Naive thymus-derived CD4-positive, alpha-beta T cell (primary cell): ENCODE measurements at regions of chr21 and their contacts with region 1.

Region 1: GRCh38 chr21:25385911-25386474 is 221.3 kb downstream of the MRPL39 start:
- DNase-seq: peak in 5 of 9 donors; percentile 14 to 35 (median 25)
- ATAC-seq: peak; percentile 57
- H3K4me3 ChIP-seq: no peak overlapping the region
- H3K4me3 Mint-ChIP-seq: no peak overlapping the region
- H3K27ac ChIP-seq: no peak overlapping the region
- H3K27ac Mint-ChIP-seq: peak overlapping the region in 1 of 9 donors; percentile 53
- H3K4me1 ChIP-seq: no peaks in the 10 kb centered on the region
- H3K4me1 Mint-ChIP-seq: peaks cover 0 to 9% (median 6%) of the 10 kb centered on the region in 7 donors
- H3K27me3 ChIP-seq: no peaks in the 10 kb centered on the region
- H3K27me3 Mint-ChIP-seq: peaks cover 0 to 13% (median 11%) of the 10 kb centered on the region in 5 donors

Region 2: DNA sequence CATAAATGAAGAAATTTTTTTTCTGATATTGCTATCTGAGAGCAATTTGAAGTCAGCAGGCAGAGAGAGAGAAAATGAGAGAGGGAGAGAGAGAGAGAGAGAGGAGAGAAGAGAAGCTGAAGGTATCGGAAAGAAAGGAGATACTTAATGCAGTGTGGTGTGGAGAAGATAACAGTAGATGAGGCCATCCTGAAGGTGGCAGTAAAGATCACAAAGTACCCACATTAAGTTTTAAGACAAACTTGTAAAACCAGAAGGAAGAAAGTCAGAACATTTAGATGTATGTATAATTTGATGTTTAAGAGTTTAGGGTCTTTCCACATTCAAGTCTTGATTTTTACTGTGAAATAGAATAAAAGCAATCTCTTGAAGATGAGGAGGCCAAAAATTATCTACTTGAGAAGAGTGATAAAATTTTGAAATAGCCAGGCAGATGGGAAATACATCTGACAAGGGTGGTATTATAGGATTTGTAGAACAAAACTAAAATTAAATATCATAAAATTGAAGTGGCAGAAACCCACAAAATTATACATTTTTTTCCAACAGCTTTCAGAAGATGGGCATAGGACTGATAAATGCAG is 1532.1 kb before region 1 on chr21:
- CTCF ChIA-PET with region 1: interaction called, 3 read pairs
- POLR2A ChIA-PET with region 1: no interaction called
- intact Hi-C with region 1: loop called (anchors 1 to 2 kb)
- DNase-seq: peak in 6 of 9 donors; percentile 18 to 56 (median 34)
- ATAC-seq: peak; percentile 75
- H3K4me3 ChIP-seq: no peak overlapping the region
- H3K4me3 Mint-ChIP-seq: no peak overlapping the region
- H3K27ac ChIP-seq: no peak overlapping the region
- H3K27ac Mint-ChIP-seq: peak overlapping the region in 1 of 9 donors; percentile 6
- H3K4me1 ChIP-seq: no peaks in the 10 kb centered on the region
- H3K4me1 Mint-ChIP-seq: peaks cover 4 to 11% (median 6%) of the 10 kb centered on the region in 7 donors
- H3K27me3 ChIP-seq: no peaks in the 10 kb centered on the region
- H3K27me3 Mint-ChIP-seq: peaks cover 0 to 8% (median 0%) of the 10 kb centered on the region in 5 donors

Region 3: GRCh38 chr21:24375201-24375600 is 1010.8 kb before region 1 on chr21:
- CTCF ChIA-PET with region 1: no interaction called
- POLR2A ChIA-PET with region 1: no interaction called
- intact Hi-C with region 1: loop called in 1 of 2 experiments (anchors 2 kb)
- DNase-seq: peak in 1 of 9 donors; percentile 7
- ATAC-seq: no peak
- H3K4me3 ChIP-seq: no peak overlapping the region
- H3K4me3 Mint-ChIP-seq: no peak overlapping the region
- H3K27ac ChIP-seq: no peak overlapping the region
- H3K27ac Mint-ChIP-seq: no peak overlapping the region
- H3K4me1 ChIP-seq: no peaks in the 10 kb centered on the region
- H3K4me1 Mint-ChIP-seq: peaks cover 0 to 3% (median 0%) of the 10 kb centered on the region in 7 donors
- H3K27me3 ChIP-seq: no peaks in the 10 kb centered on the region
- H3K27me3 Mint-ChIP-seq: no peaks in the 10 kb centered on the region

Region 4: DNA sequence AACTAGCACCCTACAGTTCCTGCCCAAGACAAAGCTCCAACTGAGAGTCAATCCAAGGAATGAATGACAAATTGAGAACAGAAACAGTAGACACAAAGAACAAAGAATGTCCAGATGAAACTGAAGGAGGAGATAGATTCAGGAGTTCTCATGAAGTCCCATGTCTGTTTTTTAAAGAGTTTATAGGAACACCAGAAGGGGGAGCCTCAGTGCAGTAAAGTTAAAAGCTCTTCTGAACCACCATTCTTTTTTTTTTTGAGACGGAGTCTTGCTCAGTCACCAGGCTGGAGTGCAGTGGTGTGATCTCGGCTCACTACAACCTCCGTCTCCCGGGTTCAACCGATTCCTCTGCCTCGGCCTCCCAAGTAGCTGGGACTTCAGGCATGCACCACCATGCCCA is 102.3 kb before region 1 on chr21:
- CTCF ChIA-PET with region 1: interaction called, 3 read pairs
- POLR2A ChIA-PET with region 1: no interaction called
- intact Hi-C with region 1: loop called in 1 of 2 experiments (anchors 1 kb)
- DNase-seq: peak in 1 of 9 donors; percentile 1
- ATAC-seq: no peak
- H3K4me3 ChIP-seq: no peak overlapping the region
- H3K4me3 Mint-ChIP-seq: no peak overlapping the region
- H3K27ac ChIP-seq: no peak overlapping the region
- H3K27ac Mint-ChIP-seq: no peak overlapping the region
- H3K4me1 ChIP-seq: no peaks in the 10 kb centered on the region
- H3K4me1 Mint-ChIP-seq: peaks cover 0 to 1% (median 0%) of the 10 kb centered on the region in 7 donors
- H3K27me3 ChIP-seq: no peaks in the 10 kb centered on the region
- H3K27me3 Mint-ChIP-seq: peaks cover 4 to 10% (median 9%) of the 10 kb centered on the region in 5 donors

Region 5: GRCh38 chr21:25350056-25350455 is 35.9 kb before region 1 on chr21:
- CTCF ChIA-PET with region 1: no interaction called
- POLR2A ChIA-PET with region 1: no interaction called
- intact Hi-C with region 1: loop called in 1 of 2 experiments (anchors 1 kb)
- DNase-seq: peak in 1 of 9 donors; percentile 29
- ATAC-seq: no peak
- H3K4me3 ChIP-seq: no peak overlapping the region
- H3K4me3 Mint-ChIP-seq: no peak overlapping the region
- H3K27ac ChIP-seq: no peak overlapping the region
- H3K27ac Mint-ChIP-seq: no peak overlapping the region
- H3K4me1 ChIP-seq: no peaks in the 10 kb centered on the region
- H3K4me1 Mint-ChIP-seq: no peaks in the 10 kb centered on the region
- H3K27me3 ChIP-seq: no peaks in the 10 kb centered on the region
- H3K27me3 Mint-ChIP-seq: peaks cover 4 to 31% (median 18%) of the 10 kb centered on the region in 5 donors

Region 6: DNA sequence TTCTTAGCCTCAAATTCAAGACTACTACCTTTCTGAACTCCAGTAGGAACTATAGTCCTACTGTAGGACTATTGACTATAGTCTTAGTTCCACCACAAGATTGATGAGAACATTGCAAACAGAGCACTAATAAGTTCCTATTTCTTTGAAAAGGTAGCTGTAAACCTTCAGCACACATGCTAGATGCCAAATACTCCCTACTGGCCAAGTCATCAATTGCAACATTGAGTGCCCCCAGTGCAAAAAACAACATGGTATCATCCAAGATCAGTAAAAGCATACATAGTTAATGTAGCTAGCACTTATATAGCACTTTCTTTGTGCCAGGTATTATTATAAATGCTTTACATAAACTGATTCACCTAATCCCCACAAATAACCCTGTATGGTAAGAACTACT is 121.5 kb after region 1 on chr21:
- CTCF ChIA-PET with region 1: no interaction called
- POLR2A ChIA-PET with region 1: no interaction called
- intact Hi-C with region 1: no loop called
- DNase-seq: no peak
- ATAC-seq: no peak
- H3K4me3 ChIP-seq: no peak overlapping the region
- H3K4me3 Mint-ChIP-seq: no peak overlapping the region
- H3K27ac ChIP-seq: no peak overlapping the region
- H3K27ac Mint-ChIP-seq: no peak overlapping the region
- H3K4me1 ChIP-seq: no peaks in the 10 kb centered on the region
- H3K4me1 Mint-ChIP-seq: peaks cover 0 to 31% (median 0%) of the 10 kb centered on the region in 7 donors
- H3K27me3 ChIP-seq: no peaks in the 10 kb centered on the region
- H3K27me3 Mint-ChIP-seq: no peaks in the 10 kb centered on the region